ENCODE measurements at regions of chr11 and their contacts with region 1.

Region 1: GRCh38 chr11:45771566-45772448 is 33.1 kb upstream of the SLC35C1 start:
- DNase-seq: peak; percentile 59 to 83
- H3K4me3 ChIP-seq: peak overlapping the region; percentile 57
- H3K27ac ChIP-seq: no peak overlapping the region
- H3K4me1 ChIP-seq: no peaks in the 10 kb centered on the region
- H3K27me3 ChIP-seq: peaks cover 78% of the 10 kb centered on the region
- CTCF ChIP-seq: peak; percentile 89

Region 2: GRCh38 chr11:45339729-45340519 is 431.9 kb before region 1 on chr11:
- CTCF ChIA-PET with region 1: no interaction called
- POLR2A ChIA-PET with region 1: no interaction called
- intact Hi-C with region 1: loop called (anchors 1 kb)
- DNase-seq: peak; percentile 53 to 83
- H3K4me3 ChIP-seq: no peak overlapping the region
- H3K27ac ChIP-seq: no peak overlapping the region
- H3K4me1 ChIP-seq: no peaks in the 10 kb centered on the region
- H3K27me3 ChIP-seq: peaks cover 83% of the 10 kb centered on the region
- CTCF ChIP-seq: peak; percentile 88

Region 3: DNA sequence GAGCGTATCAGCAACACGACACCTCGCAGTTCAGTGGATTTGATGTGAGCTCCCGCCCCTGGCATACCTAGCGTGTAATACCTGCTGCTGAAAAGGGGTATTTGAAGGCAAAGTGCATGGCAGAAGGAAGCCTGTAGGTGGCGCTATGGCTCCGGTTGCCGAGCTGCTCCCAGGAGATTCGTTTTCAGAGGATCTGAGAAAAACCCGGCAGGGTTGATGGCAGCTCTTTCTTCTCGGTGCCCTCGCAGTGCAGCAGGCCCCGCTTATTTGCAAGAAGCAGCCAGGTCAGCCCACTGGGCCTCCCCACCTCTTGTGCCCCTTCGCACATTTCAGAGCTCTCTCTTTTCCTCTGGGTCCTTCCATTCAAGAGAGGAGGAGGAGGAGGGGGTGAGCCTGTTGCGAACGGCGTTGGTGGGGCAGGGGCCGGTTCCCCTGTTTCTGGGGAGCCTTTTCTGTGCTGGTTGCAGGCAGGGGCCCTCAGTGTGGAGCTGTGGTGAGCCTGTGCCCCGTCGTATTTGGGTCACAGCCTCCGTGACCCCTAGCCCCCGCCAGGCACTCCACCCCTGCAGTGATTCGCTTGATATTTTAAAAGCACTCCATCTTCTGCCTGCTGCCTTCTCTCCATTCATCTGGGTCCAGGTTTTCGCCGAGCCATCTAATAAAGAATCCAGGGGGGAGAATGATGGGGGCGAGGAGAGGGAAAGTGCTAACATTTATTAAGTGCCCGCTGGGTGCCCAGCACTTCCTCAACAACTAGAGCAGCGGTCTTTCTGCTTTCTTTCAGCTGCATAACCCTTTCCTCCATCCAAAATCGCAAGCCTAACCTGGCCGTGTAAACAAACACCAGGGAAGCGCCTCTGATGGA is 400.3 kb before region 1 on chr11:
- CTCF ChIA-PET with region 1: interaction called, 11 read pairs
- POLR2A ChIA-PET with region 1: no interaction called
- intact Hi-C with region 1: no loop called
- DNase-seq: peak; percentile 52 to 53
- H3K4me3 ChIP-seq: no peak overlapping the region
- H3K27ac ChIP-seq: no peak overlapping the region
- H3K4me1 ChIP-seq: no peaks in the 10 kb centered on the region
- H3K27me3 ChIP-seq: peaks cover 96% of the 10 kb centered on the region
- CTCF ChIP-seq: peak; percentile 92

Region 4: DNA sequence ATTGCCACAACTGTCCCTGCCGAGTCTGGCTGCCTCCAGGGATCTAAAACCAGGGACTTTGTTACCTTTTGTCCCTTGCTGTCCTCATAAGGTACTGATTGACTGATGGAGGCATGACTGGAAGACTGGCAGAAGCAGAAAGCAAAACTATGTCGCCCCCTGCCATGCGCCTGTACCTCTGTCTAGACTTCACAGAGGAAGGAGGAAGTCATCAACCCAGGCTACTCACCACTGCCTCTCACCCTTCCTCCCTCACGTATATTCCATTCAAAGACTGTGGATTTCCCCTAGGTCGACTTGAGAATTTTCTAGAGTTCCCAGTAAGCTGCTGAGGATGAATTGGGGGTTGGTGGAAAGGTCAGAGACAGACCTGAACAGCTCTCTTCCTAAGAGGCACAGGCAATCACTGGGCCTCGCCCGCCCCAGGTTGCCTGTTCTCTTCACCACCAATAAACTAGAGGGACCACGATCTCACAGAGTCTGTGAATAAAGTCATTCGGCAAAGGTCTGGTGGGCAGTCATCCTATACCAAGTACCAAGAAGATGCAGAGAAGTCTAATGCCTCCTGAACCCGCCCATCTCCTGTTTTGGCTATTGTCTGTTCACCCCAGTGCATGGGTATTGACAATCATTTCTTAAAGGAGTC is 78.9 kb before region 1 on chr11:
- CTCF ChIA-PET with region 1: no interaction called
- POLR2A ChIA-PET with region 1: interaction called, 12 read pairs
- intact Hi-C with region 1: no loop called
- DNase-seq: no peak
- H3K4me3 ChIP-seq: no peak overlapping the region
- H3K27ac ChIP-seq: no peak overlapping the region
- H3K4me1 ChIP-seq: no peaks in the 10 kb centered on the region
- H3K27me3 ChIP-seq: peaks cover 94% of the 10 kb centered on the region
- CTCF ChIP-seq: no peak

Region 5: GRCh38 chr11:45804761-45805304 is 33.0 kb after region 1 on chr11 and contains the start of gene SLC35C1:
- CTCF ChIA-PET with region 1: no interaction called
- POLR2A ChIA-PET with region 1: no interaction called
- intact Hi-C with region 1: loop called (anchors 2 kb)
- DNase-seq: peak; percentile 88 to 98
- H3K4me3 ChIP-seq: peak within 1 kb of the TSS; percentile 84
- H3K27ac ChIP-seq: no peak within 1 kb of the TSS
- H3K4me1 ChIP-seq: peaks cover 28% of the 10 kb centered on the region
- H3K27me3 ChIP-seq: no peaks in the 10 kb centered on the region
- CTCF ChIP-seq: peak; percentile 32; the same call in 1 of the 2 replicates
- total RNA-seq, gene SLC35C1: 15.2 and 15.6 TPM in 2 replicates

Measured in PC-9 (cell line).